ENCODE measurements at regions of chr3 and their contacts with region 1.

Region 1: DNA sequence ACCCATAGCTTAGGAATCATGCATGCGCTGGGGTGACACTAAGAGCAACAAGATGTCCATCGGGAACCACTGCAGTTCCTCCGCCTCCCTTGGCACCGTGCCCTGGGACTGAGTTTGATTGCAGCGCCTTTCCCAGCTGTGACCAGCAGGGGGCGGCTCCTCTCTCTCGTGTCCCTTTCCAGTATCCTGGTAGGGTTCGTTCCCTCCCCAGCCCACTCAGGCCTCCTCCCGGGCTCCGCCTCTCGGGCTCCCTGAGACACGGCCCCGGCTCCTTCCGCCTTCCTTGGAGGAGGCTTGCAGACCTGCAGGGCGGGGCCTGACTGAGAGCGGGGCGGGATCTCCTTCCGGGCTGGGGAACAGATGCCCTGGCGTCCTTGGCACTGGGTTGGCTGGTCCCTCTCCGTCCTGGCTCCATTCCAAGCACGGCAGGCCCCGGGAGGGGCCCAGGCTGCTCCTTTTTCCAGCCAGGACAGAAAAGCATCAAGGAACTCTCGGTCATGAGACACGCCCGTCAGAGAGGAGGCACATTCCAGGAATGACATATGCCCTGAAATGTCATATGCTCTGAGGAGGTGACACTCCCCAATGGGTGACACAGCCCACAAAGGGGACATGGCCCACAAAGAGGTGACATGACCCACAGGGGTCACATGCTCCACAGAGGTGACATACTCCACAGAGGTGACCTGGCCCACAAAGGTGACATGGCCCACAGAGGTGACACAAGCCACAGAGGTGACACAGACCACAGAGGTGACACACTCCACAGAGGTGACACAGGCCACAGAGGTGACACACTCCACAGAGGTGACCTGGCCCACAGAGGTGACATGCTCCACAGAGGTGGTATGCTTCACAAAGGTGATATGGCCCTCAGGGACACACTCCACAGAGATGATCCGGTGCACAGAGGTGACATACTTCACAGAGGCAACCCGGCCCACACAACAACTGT is 79.0 kb downstream of the ABHD5 start:
- DNase-seq: peak; percentile 93
- H3K4me3 ChIP-seq: peak overlapping the region in 1 of 3 experiments; percentile 23
- H3K27ac ChIP-seq: peak overlapping the region; percentile 16
- H3K4me1 ChIP-seq: peaks cover 50% of the 10 kb centered on the region
- H3K27me3 ChIP-seq: no peaks in the 10 kb centered on the region
- CTCF ChIP-seq: peak; percentile 98
- POLR2A ChIP-seq: no peak

Region 2: DNA sequence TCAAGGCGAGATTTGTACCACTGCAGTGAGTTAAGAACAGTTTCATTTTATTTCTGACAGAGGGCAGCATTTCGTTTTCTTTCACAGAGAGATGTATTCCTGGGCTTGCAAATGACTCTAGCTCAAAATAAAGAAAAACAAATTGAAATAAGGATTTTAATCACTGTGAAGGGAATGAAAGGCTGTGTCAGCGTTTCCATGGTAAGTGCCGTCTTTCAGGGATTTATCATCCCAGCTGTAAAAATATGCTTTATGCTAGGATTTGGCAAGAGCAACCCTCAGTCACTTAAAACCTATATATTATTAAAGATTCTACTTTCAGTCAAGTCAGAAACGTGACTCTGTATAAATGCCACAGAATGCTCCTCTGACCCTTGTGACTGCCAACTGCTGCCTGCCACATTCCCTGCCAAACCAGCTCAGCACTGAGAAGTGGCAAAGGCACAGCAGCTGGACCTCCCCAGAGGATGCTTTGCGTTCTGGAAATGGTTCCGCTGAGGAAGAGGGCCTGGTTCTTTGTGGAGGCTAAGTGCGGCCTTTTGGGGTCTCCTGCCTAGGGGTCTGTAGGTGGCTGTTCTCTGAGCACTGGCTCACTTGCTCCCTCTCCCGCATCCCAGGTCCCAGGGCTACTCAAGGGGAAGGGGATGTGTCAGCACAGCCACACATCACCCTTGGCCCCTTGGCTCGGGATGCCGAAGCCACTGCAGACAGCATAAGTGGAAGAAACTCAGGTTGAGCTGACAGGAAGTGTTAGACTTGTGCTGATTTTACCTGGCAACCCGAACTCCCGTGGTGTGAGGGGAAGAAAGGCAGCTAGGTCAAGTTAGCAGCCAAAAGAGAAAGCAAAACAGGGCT is 607.3 kb before region 1 on chr3:
- CTCF ChIA-PET with region 1: interaction called, 5 read pairs
- POLR2A ChIA-PET with region 1: no interaction called
- dilution Hi-C with region 1: no loop called
- intact Hi-C with region 1: loop called (anchors 5 kb)
- DNase-seq: peak; percentile 86
- H3K4me3 ChIP-seq: no peak overlapping the region
- H3K27ac ChIP-seq: peak overlapping the region; percentile 65
- H3K4me1 ChIP-seq: peaks cover 12% of the 10 kb centered on the region
- H3K27me3 ChIP-seq: no peaks in the 10 kb centered on the region
- CTCF ChIP-seq: peak; percentile 33 to 36
- POLR2A ChIP-seq: no peak

Region 3: GRCh38 chr3:43389388-43390254 is 380.1 kb before region 1 on chr3:
- CTCF ChIA-PET with region 1: interaction called, 3 read pairs
- POLR2A ChIA-PET with region 1: interaction called, 3 read pairs
- dilution Hi-C with region 1: no loop called
- intact Hi-C with region 1: loop called (anchors 1 kb)
- DNase-seq: peak; percentile 97
- H3K4me3 ChIP-seq: no peak overlapping the region
- H3K27ac ChIP-seq: peak overlapping the region; percentile 97
- H3K4me1 ChIP-seq: peaks cover 68% of the 10 kb centered on the region
- H3K27me3 ChIP-seq: no peaks in the 10 kb centered on the region
- CTCF ChIP-seq: no peak
- POLR2A ChIP-seq: peak; percentile 90

Region 4: DNA sequence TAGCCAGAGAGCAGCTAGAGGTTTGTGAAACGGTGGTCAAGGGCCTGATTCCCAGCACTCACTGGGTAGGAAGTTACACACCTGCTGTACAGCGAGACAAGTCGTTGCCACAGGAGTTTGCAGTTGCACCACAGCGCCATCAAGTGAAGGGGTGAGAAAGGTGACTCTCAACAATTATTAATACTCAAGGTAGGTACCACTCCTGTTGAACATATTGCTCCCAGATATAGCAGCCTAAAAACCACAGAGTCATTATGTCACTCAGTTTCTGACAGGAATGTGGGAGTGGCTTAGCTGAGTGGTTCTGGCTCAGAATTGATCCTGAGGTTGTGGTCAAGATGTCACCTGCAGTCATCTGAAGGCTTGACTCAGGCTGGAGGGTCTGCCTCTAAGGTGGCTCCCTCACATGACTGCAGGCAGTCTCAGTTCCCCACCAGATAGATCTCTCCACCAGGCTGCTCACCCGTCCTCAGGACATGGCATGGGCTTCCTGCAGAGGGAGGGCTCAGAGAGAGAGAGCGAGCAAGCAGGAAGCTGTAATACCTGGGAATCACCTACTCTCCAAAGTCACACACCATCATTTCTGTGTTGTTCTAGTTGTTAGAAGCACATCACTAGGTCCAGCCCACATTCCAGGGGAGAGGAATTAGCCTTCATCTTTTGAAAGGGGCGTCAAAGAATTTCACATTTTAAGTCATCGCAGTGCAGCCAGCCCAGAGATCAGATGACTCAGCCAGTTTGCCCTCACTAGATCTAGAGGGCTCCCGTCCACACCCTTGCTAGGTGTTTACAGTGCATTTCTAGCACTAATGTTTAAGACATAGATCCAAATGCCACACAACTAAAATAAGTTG is 130.9 kb before region 1 on chr3:
- CTCF ChIA-PET with region 1: no interaction called
- POLR2A ChIA-PET with region 1: no interaction called
- dilution Hi-C with region 1: no loop called
- intact Hi-C with region 1: no loop called
- DNase-seq: peak; percentile 9
- H3K4me3 ChIP-seq: no peak overlapping the region
- H3K27ac ChIP-seq: no peak overlapping the region
- H3K4me1 ChIP-seq: peaks cover 15% of the 10 kb centered on the region
- H3K27me3 ChIP-seq: peaks cover 0 to 2% of the 10 kb centered on the region in 2 experiments
- CTCF ChIP-seq: no peak
- POLR2A ChIP-seq: no peak

Region 5: DNA sequence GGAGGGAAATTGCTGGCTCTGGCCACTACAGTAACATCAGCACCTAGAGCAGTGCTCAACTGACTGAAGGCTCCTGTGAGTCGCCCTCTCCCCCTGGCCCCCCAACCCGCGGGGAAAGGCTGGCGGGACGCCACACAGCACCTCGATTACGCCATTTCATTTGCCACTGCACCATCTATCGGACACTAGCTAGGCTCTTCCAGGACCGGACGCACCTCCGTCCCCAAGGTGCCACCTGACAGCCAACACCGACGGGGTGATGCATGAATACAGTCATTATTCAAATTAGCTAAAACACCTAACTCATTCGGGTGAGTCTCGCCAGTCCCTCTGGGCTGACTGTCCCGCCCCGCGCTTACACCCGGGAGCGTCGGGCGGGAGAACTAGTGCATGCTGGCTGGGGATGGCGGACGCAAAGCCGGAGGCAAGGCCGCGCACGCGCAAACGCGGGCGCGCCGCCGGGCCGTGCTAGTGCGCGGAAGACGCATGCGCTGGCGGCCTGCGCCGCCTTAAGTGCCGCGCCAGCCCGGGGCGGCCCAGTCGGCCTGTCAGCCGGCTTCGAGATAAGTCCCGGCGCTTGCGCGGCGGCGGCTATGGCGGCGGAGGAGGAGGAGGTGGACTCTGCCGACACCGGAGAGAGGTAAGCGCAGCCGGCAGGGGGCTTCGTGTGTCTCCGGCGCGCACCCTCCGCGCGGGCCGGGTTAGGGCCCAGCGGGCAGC is 79.2 kb before region 1 on chr3 and contains the start of gene ABHD5:
- CTCF ChIA-PET with region 1: interaction called, 9 read pairs
- POLR2A ChIA-PET with region 1: no interaction called
- dilution Hi-C with region 1: no loop called
- intact Hi-C with region 1: loop called (anchors 1 kb)
- DNase-seq: peak; percentile 97
- H3K4me3 ChIP-seq: peak within 1 kb of the TSS; percentile 62 to 88 (median 87)
- H3K27ac ChIP-seq: peak within 1 kb of the TSS; percentile 76
- H3K4me1 ChIP-seq: peaks cover 12% of the 10 kb centered on the region
- H3K27me3 ChIP-seq: peaks cover 0 to 1% of the 10 kb centered on the region in 2 experiments
- CTCF ChIP-seq: peak; percentile 17 to 55
- POLR2A ChIP-seq: peak; percentile 100
- total RNA-seq, gene ABHD5: 17.1 and 21.2 TPM in 2 replicates

Region 6: DNA sequence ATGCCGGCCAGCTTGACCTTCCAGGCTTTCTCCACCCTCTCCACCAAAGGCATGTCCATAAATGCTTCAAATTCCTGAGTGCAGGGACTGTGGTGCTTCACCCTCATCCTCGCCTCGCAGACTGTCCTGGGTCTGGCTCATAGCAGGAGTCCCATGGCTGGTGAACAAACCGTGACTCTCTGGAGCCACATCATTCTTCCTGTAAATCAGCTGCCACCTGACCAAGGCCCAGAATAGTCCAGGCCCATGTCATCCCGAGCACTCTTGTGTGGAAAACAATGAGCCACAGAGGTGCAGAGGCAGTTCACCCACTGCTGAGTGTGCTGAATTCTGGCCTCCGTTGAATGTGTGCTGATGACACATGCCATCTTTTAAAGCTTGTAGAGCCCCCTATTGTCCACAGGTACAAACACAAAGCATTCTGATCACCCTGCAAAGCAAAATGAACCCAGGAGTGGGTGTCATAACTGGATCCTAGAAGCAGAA is 10.4 kb before region 1 on chr3:
- CTCF ChIA-PET with region 1: interaction called, 21 read pairs
- POLR2A ChIA-PET with region 1: no interaction called
- dilution Hi-C with region 1: no loop called
- intact Hi-C with region 1: no loop called
- DNase-seq: peak; percentile 65
- H3K4me3 ChIP-seq: no peak overlapping the region
- H3K27ac ChIP-seq: peak overlapping the region; percentile 1
- H3K4me1 ChIP-seq: peaks cover 23% of the 10 kb centered on the region
- H3K27me3 ChIP-seq: no peaks in the 10 kb centered on the region
- CTCF ChIP-seq: peak; percentile 8 to 22
- POLR2A ChIP-seq: no peak

Region 7: DNA sequence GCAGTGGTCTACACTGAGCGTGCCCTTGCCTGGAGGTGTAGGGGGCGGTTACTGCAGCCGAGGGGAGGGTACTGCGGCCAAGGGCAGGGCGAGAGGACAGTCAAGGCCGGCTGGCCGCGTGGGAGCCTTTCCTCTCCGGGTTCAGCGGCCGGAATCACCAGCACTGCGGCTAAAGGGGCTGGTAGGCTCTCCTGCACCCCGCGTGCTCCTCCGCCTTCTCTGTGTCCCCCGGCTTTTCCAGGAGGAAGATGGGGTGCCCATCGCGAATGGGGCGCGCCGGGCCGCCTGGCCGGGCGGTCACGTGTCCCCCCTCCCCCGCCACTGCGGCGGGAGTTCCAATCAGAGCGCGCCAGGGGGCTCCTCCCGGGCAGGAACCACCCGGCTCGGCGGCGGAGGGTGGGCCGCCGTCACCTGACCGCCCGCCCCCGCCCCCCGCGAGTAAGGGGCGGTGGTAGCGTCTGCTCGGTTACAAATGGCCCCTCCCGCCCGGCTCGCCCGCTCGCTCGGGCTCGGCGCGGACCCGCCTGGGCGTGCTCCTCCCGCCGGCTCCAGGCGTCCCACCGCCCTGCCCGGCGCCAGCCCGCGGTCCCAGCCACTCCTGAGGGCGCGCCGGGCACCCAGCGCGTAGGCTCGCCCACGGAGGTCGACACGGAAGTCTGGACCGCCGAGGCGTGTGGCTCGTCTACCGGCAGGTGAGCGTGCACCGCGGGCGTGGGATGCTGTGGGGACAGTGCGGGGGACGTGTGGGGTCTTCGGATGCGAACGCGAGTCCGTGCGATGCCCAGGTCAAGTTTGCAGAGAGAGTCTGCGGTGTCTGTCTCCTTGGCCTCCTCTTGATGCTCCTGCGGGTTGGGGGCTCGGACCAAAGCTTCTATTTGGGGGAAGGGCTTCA is 229.3 kb after region 1 on chr3:
- CTCF ChIA-PET with region 1: no interaction called
- POLR2A ChIA-PET with region 1: no interaction called
- dilution Hi-C with region 1: no loop called
- intact Hi-C with region 1: loop called (anchors 1 kb)
- DNase-seq: peak; percentile 6
- H3K4me3 ChIP-seq: peak overlapping the region in 2 of 3 experiments; percentile 11 to 15
- H3K27ac ChIP-seq: no peak overlapping the region
- H3K4me1 ChIP-seq: peaks cover 29% of the 10 kb centered on the region
- H3K27me3 ChIP-seq: peaks cover 59 to 78% of the 10 kb centered on the region in 2 experiments
- CTCF ChIP-seq: no peak
- POLR2A ChIP-seq: no peak

Region 8: DNA sequence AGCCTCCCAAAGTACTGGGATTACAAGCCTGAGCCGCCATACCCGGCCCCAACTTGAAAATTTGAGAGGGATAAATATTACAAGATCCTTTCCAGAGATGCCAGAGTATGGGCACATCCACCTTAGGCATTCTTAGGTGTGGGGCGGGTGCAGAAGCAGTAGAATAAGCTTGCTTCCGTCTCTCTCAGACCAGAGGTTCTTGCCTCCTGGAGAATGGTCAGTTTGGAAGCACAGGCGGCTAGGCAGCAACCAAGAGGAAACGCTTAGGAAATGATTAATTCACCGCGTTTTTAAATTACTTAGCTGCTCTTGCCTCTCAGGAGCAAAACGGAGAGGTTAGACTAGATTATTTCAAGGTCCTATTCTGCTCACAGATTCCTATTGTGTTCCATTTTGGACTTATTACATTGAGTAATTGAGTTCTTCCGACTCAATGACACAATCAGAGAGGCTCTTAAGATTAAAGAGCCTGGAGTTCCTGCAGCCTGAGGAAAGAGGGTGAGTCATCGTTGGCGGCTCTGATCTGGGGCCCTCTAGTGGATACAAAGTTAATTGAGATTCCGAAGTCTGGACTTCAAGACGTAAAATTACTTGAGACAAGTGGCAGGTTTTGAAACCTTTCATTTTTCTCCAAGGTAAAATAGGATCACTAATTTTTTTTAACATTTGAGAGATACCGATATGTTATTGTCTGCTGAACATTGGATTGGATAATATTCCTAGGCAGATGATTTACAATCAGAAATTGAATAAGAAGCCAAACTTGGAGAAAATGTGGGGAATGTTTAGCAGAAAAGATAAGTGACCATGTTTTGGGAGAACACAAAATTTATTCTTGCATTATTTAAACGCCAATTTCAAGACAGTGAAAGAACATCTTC is 466.1 kb after region 1 on chr3:
- CTCF ChIA-PET with region 1: interaction called, 3 read pairs
- POLR2A ChIA-PET with region 1: no interaction called
- dilution Hi-C with region 1: no loop called
- intact Hi-C with region 1: loop called (anchors 1 kb)
- DNase-seq: peak; percentile 96
- H3K4me3 ChIP-seq: no peak overlapping the region
- H3K27ac ChIP-seq: peak overlapping the region; percentile 57
- H3K4me1 ChIP-seq: peaks cover 12% of the 10 kb centered on the region
- H3K27me3 ChIP-seq: no peaks in the 10 kb centered on the region
- CTCF ChIP-seq: peak; percentile 59 to 86
- POLR2A ChIP-seq: no peak